ENCODE measurements at regions of chr15 and their contacts with region 1.

Region 1: DNA sequence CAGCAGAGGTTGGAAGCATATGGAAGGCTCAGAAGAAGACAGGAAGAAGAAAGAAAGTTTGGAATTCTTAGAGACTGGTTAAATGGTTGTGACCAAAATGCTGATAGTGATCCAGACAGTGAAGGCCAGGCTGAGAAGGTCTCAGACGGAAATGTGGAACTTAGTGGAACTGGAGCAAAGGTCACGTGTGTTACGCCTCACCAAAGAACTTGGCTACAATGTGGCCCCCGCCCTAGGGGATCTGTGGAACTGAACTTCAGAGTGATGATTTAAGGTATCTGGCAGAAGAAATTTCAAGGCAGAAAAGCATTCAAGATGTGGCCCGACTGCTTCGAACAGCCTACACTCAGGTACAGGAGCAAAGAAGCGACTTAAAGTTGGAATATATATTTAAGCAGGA is 83.1 kb downstream of the MYO5A start:
- DNase-seq: no peak
- ATAC-seq: no peak
- H3K4me3 ChIP-seq: no peak overlapping the region
- H3K4me3 Mint-ChIP-seq: no peak overlapping the region
- H3K27ac ChIP-seq: no peak overlapping the region
- H3K27ac Mint-ChIP-seq: no peak overlapping the region
- H3K4me1 ChIP-seq: no peaks in the 10 kb centered on the region
- H3K4me1 Mint-ChIP-seq: peaks cover 32% of the 10 kb centered on the region
- H3K27me3 ChIP-seq: no peaks in the 10 kb centered on the region
- H3K27me3 Mint-ChIP-seq: no peaks in the 10 kb centered on the region
- CTCF ChIP-seq: no peak

Region 2: GRCh38 chr15:52505151-52505550 is 59.6 kb after region 1 on chr15:
- CTCF ChIA-PET with region 1: no interaction called
- POLR2A ChIA-PET with region 1: interaction called, 3 read pairs
- intact Hi-C with region 1: loop called in 1 of 2 experiments (anchors 5 kb)
- DNase-seq: no peak
- ATAC-seq: no peak
- H3K4me3 ChIP-seq: no peak overlapping the region
- H3K4me3 Mint-ChIP-seq: no peak overlapping the region
- H3K27ac ChIP-seq: no peak overlapping the region
- H3K27ac Mint-ChIP-seq: no peak overlapping the region
- H3K4me1 ChIP-seq: peaks cover 4% of the 10 kb centered on the region
- H3K4me1 Mint-ChIP-seq: peaks cover 35% of the 10 kb centered on the region
- H3K27me3 ChIP-seq: no peaks in the 10 kb centered on the region
- H3K27me3 Mint-ChIP-seq: no peaks in the 10 kb centered on the region
- CTCF ChIP-seq: no peak

Measured in CD8-positive, alpha-beta T cell (primary cell).